ENCODE measurements at regions of chr11 and their contacts with region 1.

Region 1: DNA sequence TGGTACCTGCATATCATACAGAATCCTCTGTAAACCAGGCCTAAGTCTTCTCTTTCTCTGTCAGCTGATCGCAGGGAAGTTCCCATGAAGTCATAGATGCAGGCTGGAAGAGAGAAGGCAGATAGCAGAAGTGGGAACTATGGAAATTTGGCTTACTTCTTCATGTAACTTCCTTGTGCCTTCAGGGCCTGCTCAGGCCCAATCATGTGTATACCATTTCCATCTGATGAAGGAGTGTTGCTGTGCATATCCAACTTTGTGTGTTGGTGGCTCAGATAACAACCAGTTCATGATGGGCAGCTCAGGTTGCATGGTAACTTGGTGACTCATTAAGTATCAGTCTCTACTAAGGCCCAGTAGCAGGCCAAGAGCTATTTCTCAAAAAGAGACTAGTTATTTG is 53.1 kb upstream of the CEP295 start:
- H3K4me3 Mint-ChIP-seq: no peak overlapping the region
- H3K27ac Mint-ChIP-seq: peak overlapping the region; percentile 85
- H3K4me1 Mint-ChIP-seq: peaks cover 20% of the 10 kb centered on the region
- H3K27me3 Mint-ChIP-seq: no peaks in the 10 kb centered on the region

Region 2: GRCh38 chr11:93529707-93530467 is 78.5 kb before region 1 on chr11:
- intact Hi-C with region 1: loop called (anchors 2 kb)
- H3K4me3 Mint-ChIP-seq: peak overlapping the region; percentile 13
- H3K27ac Mint-ChIP-seq: peak overlapping the region; percentile 91
- H3K4me1 Mint-ChIP-seq: peaks cover 78% of the 10 kb centered on the region
- H3K27me3 Mint-ChIP-seq: no peaks in the 10 kb centered on the region

Region 3: DNA sequence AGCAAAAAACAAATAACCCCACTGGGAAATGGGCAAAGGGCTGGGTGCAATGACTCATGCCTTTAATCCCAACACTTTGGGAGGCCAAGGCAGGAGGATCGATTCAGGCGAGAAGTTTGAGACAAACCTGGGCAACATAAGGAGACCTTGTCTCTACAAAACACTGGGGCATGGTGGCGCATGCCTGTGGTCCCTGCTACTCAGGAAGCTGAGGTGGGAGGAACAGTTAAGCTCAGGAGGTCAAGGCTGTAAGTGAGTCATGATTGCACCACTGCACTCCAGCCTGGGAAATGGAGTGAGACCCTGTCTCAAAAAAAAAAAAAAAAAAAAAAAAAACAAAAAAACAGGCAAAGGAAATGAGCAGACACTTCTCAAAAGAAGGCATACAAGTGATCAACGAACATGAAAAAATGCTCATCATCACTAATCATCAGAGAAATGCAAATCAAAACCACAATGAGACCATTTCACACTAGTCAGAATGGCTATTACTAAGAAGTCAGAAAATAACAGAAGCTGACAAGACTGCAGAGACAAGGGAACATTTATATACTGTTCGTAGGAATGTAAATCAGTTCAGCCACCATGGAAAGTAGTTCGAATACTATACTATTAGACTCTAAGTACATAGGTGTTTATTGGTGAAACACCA is 17.0 kb before region 1 on chr11:
- intact Hi-C with region 1: no loop called
- H3K4me3 Mint-ChIP-seq: no peak overlapping the region
- H3K27ac Mint-ChIP-seq: no peak overlapping the region
- H3K4me1 Mint-ChIP-seq: peaks cover 10% of the 10 kb centered on the region
- H3K27me3 Mint-ChIP-seq: no peaks in the 10 kb centered on the region

Region 4: GRCh38 chr11:93741094-93741881 is 132.9 kb after region 1 on chr11 and contains the starts of genes C11orf54 and TAF1D:
- intact Hi-C with region 1: no loop called
- H3K4me3 Mint-ChIP-seq: peak within 1 kb of the TSS; percentile 99
- H3K27ac Mint-ChIP-seq: peak within 1 kb of the TSS; percentile 100
- H3K4me1 Mint-ChIP-seq: peaks cover 53% of the 10 kb centered on the region
- H3K27me3 Mint-ChIP-seq: no peaks in the 10 kb centered on the region

Measured in dendritic cell treated with granulocyte-macrophage colony-stimulating factor and Interleukin-4, amounts not matched to agents 40 ng/mL and 50 ng/mL, for 4 days (primary cell).